Activated CD8-positive, alpha-beta memory T cell treated with anti-CD3 and anti-CD28 coated beads, Interleukin-2, amount 10 ng/mL, durations not matched to agents 7 days and 5 days (primary cell): ENCODE measurements at regions of chr12 and their contacts with region 1.

Region 1: GRCh38 chr12:49967042-49967776 is 5.5 kb downstream of the AQP5 start:
- DNase-seq: peak; percentile 93
- ATAC-seq: peak; percentile 90
- H3K4me3 Mint-ChIP-seq: peak overlapping the region; percentile 47
- H3K27ac Mint-ChIP-seq: no peak overlapping the region
- H3K4me1 Mint-ChIP-seq: peaks cover 7% of the 10 kb centered on the region
- H3K27me3 Mint-ChIP-seq: peaks cover 41% of the 10 kb centered on the region

Region 2: DNA sequence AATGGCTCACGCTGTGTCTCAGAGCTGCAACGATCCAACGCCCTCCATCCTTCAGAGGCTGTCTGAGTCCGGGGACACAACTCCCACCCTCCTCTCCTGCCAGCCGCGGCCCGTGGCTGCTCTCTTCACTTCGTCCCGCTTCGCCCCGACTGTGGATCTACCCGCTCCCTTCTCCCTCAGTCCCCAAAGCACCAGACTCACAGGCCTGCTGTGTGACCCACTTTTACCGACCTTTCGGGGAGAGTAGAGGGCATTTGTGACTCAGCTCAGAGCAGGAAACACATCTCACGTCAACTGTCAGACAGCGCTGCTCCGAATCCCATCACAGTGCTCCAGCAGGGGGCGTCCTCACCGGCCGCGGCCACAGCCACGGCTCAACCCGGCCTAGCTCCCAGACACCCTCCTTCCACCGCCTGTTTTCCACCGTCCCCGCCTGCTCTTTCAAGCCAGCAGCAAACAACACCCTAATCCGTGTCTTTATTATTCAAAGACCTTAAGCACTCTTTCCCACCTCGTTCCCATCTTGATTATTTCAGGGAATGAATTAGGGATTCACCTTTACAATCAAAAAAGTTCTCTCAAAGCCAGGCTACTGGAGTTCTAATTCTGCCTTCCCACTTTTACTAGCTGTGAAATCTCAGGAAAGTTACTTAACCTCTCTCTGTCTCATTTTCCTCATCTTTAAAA is 21.7 kb before region 1 on chr12:
- CTCF ChIA-PET with region 1: interaction called, 92 read pairs
- DNase-seq: peak; percentile 90
- ATAC-seq: peak; percentile 99
- H3K4me3 Mint-ChIP-seq: peak overlapping the region; percentile 66
- H3K27ac Mint-ChIP-seq: peak overlapping the region; percentile 87
- H3K4me1 Mint-ChIP-seq: peaks cover 25% of the 10 kb centered on the region
- H3K27me3 Mint-ChIP-seq: no peaks in the 10 kb centered on the region

Region 3: GRCh38 chr12:50016501-50017475 is 49.6 kb after region 1 on chr12:
- CTCF ChIA-PET with region 1: interaction called, 18 read pairs
- DNase-seq: no peak
- ATAC-seq: no peak
- H3K4me3 Mint-ChIP-seq: no peak overlapping the region
- H3K27ac Mint-ChIP-seq: no peak overlapping the region
- H3K4me1 Mint-ChIP-seq: peaks cover 36% of the 10 kb centered on the region
- H3K27me3 Mint-ChIP-seq: no peaks in the 10 kb centered on the region

Region 4: DNA sequence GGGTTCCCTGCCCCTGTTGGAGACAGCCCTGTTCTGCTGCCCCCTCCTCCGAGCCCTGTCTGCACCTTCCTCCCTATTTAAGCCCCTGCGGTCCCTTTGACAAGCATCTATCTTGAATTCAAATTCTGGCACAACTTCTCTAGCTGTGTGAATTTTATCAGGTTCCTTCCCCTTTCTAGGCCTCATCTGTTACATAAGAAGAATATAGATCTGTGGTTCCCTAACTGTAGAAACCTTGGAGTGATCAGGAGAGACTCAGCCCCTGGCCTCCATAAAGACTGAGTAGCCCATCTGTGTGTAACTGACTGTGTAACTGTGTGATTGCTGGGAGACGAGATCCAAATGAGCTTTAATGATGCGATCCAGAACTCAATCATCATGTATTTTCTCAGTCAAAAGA is 71.1 kb after region 1 on chr12:
- CTCF ChIA-PET with region 1: interaction called, 46 read pairs
- DNase-seq: no peak
- ATAC-seq: no peak
- H3K4me3 Mint-ChIP-seq: no peak overlapping the region
- H3K27ac Mint-ChIP-seq: no peak overlapping the region
- H3K4me1 Mint-ChIP-seq: peaks cover 4% of the 10 kb centered on the region
- H3K27me3 Mint-ChIP-seq: peaks cover 15% of the 10 kb centered on the region

Region 5: DNA sequence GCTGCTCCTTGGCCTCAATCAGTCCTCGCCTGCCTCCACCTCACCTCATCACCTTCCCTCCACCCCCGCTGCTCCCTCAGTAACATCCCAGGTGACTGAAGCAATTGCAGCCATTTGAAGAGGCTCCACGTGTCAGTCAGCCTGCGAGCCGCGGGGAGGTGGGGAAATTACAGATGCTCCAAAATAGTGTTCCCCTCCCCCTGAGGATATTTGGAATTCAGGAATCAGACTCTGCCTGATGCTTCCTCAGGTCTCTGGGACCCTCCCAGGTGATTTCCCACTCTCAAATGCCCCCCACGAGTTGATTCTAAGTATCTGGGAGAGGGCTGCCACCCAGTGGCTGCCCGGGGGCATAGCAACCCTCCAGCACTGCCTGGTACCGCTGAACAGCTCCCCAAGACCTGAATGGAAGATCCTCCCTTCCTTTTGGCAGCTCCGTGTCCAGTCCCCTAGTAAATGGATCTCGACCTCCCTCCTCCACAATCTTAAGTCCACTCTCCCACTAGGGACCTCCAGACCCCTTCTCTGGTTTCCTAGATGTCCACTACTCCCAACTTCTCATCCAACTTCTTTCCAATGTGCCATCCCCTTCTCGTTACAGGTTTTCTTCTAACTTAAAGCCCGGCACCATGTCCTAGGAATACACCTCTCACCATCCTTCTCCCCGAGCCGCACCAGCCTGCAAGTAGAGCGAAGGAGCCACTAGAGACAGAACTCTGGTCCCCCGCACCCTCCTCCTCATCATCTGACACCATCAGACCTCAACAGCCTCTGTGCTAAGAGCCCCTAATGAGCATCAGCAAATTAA is 88.8 kb after region 1 on chr12:
- CTCF ChIA-PET with region 1: interaction called, 75 read pairs
- DNase-seq: peak; percentile 72
- ATAC-seq: peak; percentile 34
- H3K4me3 Mint-ChIP-seq: peak overlapping the region; percentile 39
- H3K27ac Mint-ChIP-seq: no peak overlapping the region
- H3K4me1 Mint-ChIP-seq: peaks cover 42% of the 10 kb centered on the region
- H3K27me3 Mint-ChIP-seq: peaks cover 36% of the 10 kb centered on the region

Region 6: GRCh38 chr12:50084775-50085614 is 117.8 kb after region 1 on chr12 and contains the start of gene SMARCD1:
- CTCF ChIA-PET with region 1: interaction called, 13 read pairs
- DNase-seq: peak; percentile 90
- ATAC-seq: peak; percentile 86
- H3K4me3 Mint-ChIP-seq: peak within 1 kb of the TSS; percentile 88
- H3K27ac Mint-ChIP-seq: peak within 1 kb of the TSS; percentile 95
- H3K4me1 Mint-ChIP-seq: peaks cover 38% of the 10 kb centered on the region
- H3K27me3 Mint-ChIP-seq: no peaks in the 10 kb centered on the region
- total RNA-seq, gene SMARCD1: 62.0 to 80.8 TPM